Heart right ventricle (tissue), 16 donors: ENCODE measurements at regions of chr9 and their contacts with region 1.

Region 1: DNA sequence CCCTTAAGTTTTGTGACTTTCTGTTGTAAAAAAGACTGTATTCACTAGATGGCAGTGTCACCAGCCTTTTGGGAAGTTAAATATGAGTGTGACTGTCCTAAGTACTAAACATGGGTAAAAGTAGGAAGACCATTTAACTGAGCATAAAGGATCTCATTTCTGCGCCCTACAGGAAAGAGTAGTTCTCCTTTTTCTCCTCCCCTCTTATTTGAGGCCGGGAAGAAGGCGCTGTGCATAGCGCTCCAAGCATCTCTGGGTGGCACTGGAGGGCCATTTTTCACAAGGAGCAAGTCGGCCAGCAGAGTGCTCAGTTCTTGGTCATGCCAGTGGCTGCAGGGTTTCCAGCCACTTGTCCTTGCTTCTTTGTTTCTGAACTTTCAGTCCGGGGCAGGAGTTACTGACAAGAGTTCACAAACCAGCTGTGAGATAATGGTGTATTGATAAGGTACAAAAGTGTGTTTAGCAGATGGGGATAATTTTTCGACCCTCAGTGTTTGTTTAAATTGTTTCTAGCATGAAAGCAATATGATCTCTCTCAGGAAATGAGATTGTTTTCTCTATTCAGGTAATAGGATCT is 227.6 kb upstream of the DMRT1 start:
- DNase-seq: peak; percentile 62 to 79
- ATAC-seq: peak; percentile 88 to 96 (median 94)
- H3K4me3 ChIP-seq: peak overlapping the region in 1 of 10 donors; percentile 2
- H3K27ac ChIP-seq: peak overlapping the region in 9 of 10 donors; percentile 38 to 77 (median 59)
- H3K4me1 ChIP-seq: peaks cover 6 to 67% (median 30%) of the 10 kb centered on the region in 9 donors
- H3K27me3 ChIP-seq: no peaks in the 10 kb centered on the region
- CTCF ChIP-seq: peak; percentile 64 to 97 (median 87)

Region 2: DNA sequence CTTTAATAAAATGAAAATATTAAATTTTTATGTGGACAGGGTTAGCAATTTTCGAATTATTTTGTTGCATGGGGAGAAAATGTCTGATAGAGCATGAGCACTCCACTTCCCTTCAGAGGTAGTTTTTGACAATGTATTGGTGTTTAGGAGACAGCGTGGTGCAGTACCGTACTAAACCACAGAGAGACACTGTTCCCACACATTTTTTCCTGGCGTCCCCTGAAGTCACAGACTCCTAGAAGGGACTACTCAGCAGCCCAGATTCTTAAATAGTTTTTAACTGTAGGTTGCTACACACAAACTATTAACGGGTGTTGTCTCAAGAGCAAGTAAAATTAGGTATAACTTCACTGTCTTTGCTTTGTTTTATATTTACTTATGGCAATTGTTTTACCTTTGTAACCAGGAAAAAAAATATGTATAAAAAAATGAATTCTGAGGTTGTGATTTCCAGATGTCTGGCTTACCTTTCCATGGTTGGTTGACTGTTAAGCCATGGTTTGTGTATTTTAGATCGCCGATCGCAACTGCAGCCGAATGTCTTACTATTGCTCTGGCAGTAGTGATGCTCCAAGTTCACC is 228.0 kb before region 1 on chr9:
- intact Hi-C with region 1: loop called in 2 of 10 experiments (anchors 10 kb)
- DNase-seq: peak in 1 of 2 donors; percentile 45
- ATAC-seq: peak in 7 of 8 donors; percentile 69 to 89 (median 86)
- H3K4me3 ChIP-seq: no peak overlapping the region
- H3K27ac ChIP-seq: no peak overlapping the region
- H3K4me1 ChIP-seq: no peaks in the 10 kb centered on the region
- H3K27me3 ChIP-seq: peaks cover 0 to 3% (median 0%) of the 10 kb centered on the region in 7 donors
- CTCF ChIP-seq: peak; percentile 69 to 91 (median 87)

Region 3: DNA sequence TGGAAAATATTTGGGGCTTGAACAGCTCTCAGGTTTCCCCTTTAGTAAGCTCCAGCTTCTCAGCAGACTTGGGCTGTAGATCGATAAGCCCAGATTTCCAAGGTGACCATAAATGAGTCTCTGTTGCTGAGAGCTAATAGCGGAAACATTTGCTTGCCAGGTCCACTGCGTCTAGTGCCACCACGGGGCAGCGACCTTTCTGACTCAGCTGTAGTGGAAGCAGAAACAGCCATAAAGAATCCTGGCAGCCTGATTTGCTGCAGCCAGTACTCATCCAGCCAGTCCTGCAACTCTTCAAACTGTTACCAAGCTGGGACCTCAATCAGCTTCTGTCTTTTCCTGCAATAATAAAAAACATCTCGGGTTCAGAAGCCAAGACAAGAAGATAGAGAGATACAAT is 157.5 kb before region 1 on chr9:
- intact Hi-C with region 1: no loop called
- DNase-seq: peak; percentile 45 to 49
- ATAC-seq: peak; percentile 72 to 96 (median 92)
- H3K4me3 ChIP-seq: no peak overlapping the region
- H3K27ac ChIP-seq: peak overlapping the region; percentile 8 to 67 (median 56)
- H3K4me1 ChIP-seq: peaks cover 0 to 20% (median 3%) of the 10 kb centered on the region in 9 donors
- H3K27me3 ChIP-seq: no peaks in the 10 kb centered on the region
- CTCF ChIP-seq: no peak

Region 4: DNA sequence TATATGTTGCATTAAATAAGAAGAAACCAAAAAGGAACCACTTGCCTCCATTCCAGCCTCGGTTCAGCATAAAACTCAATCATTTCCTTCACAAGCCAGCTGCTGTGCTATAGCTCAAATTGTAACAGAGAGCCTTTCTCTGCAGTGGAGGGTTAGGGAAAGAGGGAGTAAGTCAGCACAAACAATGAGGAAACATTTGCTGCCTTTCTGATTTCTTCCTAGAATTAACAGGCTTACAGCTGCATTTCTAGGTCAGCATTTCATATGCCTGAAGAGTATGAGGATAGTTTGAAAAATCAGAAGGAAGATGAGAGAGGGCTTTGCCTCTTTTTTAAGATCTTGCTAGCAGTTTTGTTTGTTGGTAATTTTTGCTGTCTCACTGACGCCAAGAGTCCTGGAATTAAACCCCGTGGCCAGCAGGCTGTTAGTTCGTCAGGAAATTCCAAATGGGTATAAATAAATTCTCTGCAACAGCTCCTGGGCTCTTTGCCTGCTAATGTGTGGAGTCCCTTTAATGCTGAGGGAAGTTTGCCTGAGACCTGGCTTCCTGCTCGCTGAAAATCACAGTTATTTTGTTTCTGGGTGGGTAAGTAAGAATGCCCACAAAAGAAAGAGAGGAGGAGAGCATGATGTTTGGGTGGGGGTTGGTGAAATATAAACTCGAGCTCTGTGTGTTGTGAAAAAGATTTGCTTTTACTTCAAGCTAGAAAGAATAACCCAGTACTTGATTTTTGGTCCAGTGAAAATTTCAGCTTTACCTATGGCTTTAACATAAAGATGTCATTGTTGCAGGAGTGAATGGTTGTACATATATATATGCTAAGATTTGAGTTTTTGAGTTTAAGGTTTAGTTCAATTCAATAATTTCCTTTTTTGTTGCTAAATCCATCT is 79.6 kb after region 1 on chr9:
- intact Hi-C with region 1: loop called in 3 of 10 experiments (anchors 5 kb)
- DNase-seq: peak in 1 of 2 donors; percentile 81
- ATAC-seq: peak; percentile 53 to 87 (median 76)
- H3K4me3 ChIP-seq: peak overlapping the region in 9 of 10 donors; percentile 26 to 55 (median 46)
- H3K27ac ChIP-seq: peak overlapping the region; percentile 84 to 95 (median 90)
- H3K4me1 ChIP-seq: peaks cover 6 to 83% (median 67%) of the 10 kb centered on the region in 9 donors
- H3K27me3 ChIP-seq: no peaks in the 10 kb centered on the region
- CTCF ChIP-seq: no peak

Region 5: DNA sequence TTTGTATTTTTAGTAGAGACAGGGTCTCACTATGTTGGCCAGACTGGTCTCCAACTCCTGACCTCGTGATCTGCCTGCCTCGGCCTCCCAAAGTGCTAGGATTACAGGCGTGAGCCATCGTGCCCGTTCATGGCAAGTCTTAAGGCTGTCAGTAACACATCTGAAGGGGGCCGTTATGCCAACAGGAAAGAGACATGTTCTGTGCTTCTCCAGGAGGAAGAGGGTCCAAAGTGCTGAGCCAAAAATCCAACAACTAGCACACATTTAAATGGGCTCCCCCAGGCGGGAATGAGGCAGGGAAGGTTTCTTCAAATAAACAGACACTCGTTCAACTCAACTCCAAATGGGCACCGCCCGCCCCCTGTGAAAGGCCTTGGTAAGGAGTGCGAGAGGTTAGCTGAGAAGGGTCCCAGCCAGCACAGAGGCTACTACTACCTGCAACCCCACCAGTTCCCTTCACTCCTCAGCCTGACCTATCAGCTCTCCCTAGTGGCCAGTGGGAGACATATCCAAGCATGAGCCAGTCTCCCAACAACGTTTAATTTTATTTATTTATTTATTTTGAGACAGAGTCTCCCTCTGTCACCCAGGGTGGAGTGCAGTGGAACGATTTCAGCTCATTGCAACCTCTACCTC is 143.5 kb after region 1 on chr9:
- intact Hi-C with region 1: loop called in 9 of 10 experiments (anchors 1 to 5 kb)
- DNase-seq: peak in 1 of 2 donors; percentile 34
- ATAC-seq: peak; percentile 59 to 81 (median 68)
- H3K4me3 ChIP-seq: no peak overlapping the region
- H3K27ac ChIP-seq: no peak overlapping the region
- H3K4me1 ChIP-seq: peaks cover 0 to 28% (median 11%) of the 10 kb centered on the region in 9 donors
- H3K27me3 ChIP-seq: no peaks in the 10 kb centered on the region
- CTCF ChIP-seq: peak; percentile 29 to 70 (median 58)

Region 6: DNA sequence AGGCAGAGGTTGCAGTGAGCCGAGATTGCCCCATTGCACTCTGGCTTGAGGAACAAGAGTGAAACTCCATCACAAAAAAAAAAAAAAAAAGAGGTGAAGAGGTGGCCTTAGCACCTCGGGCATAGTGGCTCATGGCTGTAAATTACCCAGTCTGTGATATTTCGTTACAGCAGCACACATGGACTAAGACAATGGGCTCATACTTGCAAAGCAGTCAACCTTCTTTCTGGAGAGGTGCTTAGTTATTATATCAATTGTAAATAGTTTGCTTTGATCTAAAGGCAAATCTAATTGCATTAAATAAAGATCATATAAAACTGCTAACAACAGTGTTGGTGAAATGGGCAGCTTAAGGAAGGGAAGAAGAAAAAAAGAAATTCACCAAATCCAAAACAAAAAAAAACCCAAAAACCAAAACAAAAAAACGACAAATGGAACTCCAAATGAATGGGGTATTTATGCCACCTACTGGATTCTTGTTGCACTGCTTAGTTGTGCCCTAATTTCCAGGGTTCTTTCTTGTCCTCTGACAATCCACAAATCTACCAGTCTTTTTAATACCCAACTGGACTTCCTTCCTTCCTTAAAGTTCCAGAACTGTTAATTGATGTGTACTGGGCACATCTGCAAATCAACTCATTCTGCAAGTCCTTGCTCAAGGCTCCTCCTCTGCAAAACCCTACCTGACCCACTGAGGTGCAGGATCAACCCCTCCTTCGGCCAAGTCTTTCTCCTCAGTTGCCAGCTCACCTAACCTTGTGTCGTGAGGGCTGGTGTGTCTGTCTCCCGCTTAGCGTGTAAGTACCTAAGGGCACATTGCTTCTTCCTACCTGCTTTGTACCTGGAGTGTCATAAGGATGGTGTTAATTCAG is 192.7 kb after region 1 on chr9:
- intact Hi-C with region 1: loop called in 6 of 10 experiments (anchors 1 to 5 kb)
- DNase-seq: no peak
- ATAC-seq: no peak
- H3K4me3 ChIP-seq: no peak overlapping the region
- H3K27ac ChIP-seq: no peak overlapping the region
- H3K4me1 ChIP-seq: no peaks in the 10 kb centered on the region
- H3K27me3 ChIP-seq: peaks cover 0 to 4% (median 0%) of the 10 kb centered on the region in 7 donors
- CTCF ChIP-seq: peak; percentile 42 to 74 (median 70)